ENCODE measurements at regions of chr2 and their contacts with region 1.

Region 1: GRCh38 chr2:216698895-216699294 is 3.5 kb upstream of the IGFBP5 start:
- DNase-seq: peak in 1 of 2 donors; percentile 47
- ATAC-seq: peak in 7 of 8 donors; percentile 30 to 63 (median 48)
- H3K4me3 ChIP-seq: no peak overlapping the region
- H3K27ac ChIP-seq: peak overlapping the region in 6 of 10 donors; percentile 15 to 67 (median 38)
- H3K4me1 ChIP-seq: peaks cover 10 to 80% (median 48%) of the 10 kb centered on the region in 9 donors
- H3K27me3 ChIP-seq: peaks cover 0 to 71% (median 0%) of the 10 kb centered on the region in 7 donors
- CTCF ChIP-seq: peak; percentile 43 to 83 (median 67)

Region 2: DNA sequence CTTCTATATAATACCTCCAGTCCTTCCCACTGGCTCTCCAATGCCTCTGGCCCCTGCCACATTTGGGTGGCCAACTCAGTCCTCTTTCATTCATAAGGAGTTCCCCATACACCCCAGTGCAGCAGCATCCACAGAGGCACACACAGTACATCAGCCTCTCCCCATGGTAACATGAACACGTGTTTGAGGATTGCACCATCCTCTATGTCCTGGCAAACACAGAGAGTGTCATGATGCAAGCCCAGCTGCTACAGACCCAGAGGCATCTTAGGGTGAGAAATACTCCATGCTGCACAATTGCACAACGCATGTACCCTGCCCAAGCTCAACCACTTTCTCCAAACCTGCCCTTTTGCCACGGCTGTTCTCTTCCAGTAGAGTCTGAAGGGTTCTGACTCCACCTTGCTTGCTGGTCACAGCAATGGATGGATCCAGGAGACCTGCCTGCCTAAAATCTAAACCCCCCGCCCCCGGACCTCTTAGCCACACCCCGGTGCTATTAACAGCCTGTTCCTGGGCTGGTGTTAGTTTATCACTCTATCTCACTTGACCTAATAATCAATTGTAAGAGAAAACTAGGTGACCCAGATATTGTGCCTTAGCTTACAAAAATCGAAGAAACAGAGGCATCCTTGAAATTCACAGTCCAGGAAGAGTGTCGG is 14.9 kb before region 1 on chr2:
- intact Hi-C with region 1: no loop called
- DNase-seq: no peak
- ATAC-seq: peak in 7 of 8 donors; percentile 22 to 83 (median 55)
- H3K4me3 ChIP-seq: no peak overlapping the region
- H3K27ac ChIP-seq: peak overlapping the region in 6 of 10 donors; percentile 18 to 92 (median 36)
- H3K4me1 ChIP-seq: peaks cover 22 to 98% (median 68%) of the 10 kb centered on the region in 9 donors
- H3K27me3 ChIP-seq: peaks cover 0 to 17% (median 0%) of the 10 kb centered on the region in 7 donors
- CTCF ChIP-seq: no peak

Region 3: GRCh38 chr2:216777650-216778273 is 78.9 kb after region 1 on chr2:
- intact Hi-C with region 1: loop called in 3 of 10 experiments (anchors 5 to 10 kb)
- DNase-seq: no peak
- ATAC-seq: no peak
- H3K4me3 ChIP-seq: no peak overlapping the region
- H3K27ac ChIP-seq: no peak overlapping the region
- H3K4me1 ChIP-seq: peaks cover 16 to 41% (median 24%) of the 10 kb centered on the region in 9 donors
- H3K27me3 ChIP-seq: no peaks in the 10 kb centered on the region
- CTCF ChIP-seq: peak; percentile 16 to 64 (median 45)

Region 4: GRCh38 chr2:216849987-216850386 is 151.1 kb after region 1 on chr2:
- intact Hi-C with region 1: loop called in 1 of 10 experiments (anchors 10 kb)
- DNase-seq: peak; percentile 70 to 75
- ATAC-seq: peak; percentile 47 to 92 (median 89)
- H3K4me3 ChIP-seq: no peak overlapping the region
- H3K27ac ChIP-seq: peak overlapping the region in 1 of 10 donors; percentile 40
- H3K4me1 ChIP-seq: peaks cover 2 to 29% (median 17%) of the 10 kb centered on the region in 9 donors
- H3K27me3 ChIP-seq: no peaks in the 10 kb centered on the region
- CTCF ChIP-seq: no peak

Region 5: DNA sequence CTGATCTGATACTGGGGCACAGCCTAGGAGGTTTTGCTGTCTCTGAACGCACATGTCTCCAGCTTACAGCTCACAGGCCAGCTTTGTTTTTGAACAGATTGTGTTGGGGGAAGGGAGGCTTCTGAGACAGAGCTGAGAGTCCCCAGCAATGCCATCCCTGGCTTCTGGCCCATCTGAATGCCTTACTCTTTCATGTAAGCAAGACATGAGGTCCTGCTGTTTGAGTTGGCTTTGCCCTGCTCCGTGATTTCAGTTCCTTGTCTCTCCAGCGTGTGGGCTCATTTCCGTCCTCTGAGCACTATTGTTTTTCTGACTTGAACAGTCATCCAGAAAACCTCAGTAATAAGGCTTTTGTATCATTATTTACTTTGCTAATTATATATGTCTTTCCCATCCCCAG is 355.9 kb after region 1 on chr2:
- intact Hi-C with region 1: loop called in 3 of 10 experiments (anchors 5 to 10 kb)
- DNase-seq: peak in 1 of 2 donors; percentile 29
- ATAC-seq: peak in 3 of 8 donors; percentile 12 to 36 (median 33)
- H3K4me3 ChIP-seq: no peak overlapping the region
- H3K27ac ChIP-seq: peak overlapping the region in 3 of 10 donors; percentile 32 to 47 (median 37)
- H3K4me1 ChIP-seq: peaks cover 2 to 43% (median 19%) of the 10 kb centered on the region in 9 donors
- H3K27me3 ChIP-seq: no peaks in the 10 kb centered on the region
- CTCF ChIP-seq: no peak

Region 6: GRCh38 chr2:217075268-217076057 is 376.6 kb after region 1 on chr2:
- intact Hi-C with region 1: loop called in 1 of 10 experiments (anchors 5 kb)
- DNase-seq: peak; percentile 42 to 68
- ATAC-seq: peak; percentile 70 to 94 (median 85)
- H3K4me3 ChIP-seq: no peak overlapping the region
- H3K27ac ChIP-seq: peak overlapping the region in 9 of 10 donors; percentile 60 to 84 (median 80)
- H3K4me1 ChIP-seq: peaks cover 7 to 37% (median 21%) of the 10 kb centered on the region in 9 donors
- H3K27me3 ChIP-seq: no peaks in the 10 kb centered on the region
- CTCF ChIP-seq: no peak

Region 7: DNA sequence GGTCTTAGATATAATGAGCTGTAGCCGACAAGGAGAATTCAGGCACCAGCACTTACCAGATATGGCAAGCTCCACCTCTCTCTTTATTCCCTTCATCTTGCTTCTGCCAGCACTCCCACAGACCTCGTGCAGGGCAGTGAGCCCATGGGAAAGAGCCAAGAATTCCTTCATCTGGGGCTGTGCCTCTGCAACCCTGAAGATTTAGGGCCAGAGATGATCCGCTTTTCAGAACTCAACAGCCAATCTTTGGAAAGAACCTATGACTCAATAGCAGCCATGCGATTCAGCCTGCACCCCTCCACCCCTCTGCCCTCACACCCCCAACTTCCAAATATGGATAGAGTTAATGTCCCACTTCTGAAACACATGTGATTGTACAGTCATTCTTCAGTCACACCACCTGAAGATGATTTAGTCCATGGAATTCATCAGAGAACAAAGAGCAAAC is 694.7 kb after region 1 on chr2:
- intact Hi-C with region 1: loop called in 1 of 10 experiments (anchors 10 kb)
- DNase-seq: peak; percentile 50 to 79
- ATAC-seq: peak; percentile 84 to 97 (median 94)
- H3K4me3 ChIP-seq: no peak overlapping the region
- H3K27ac ChIP-seq: peak overlapping the region in 6 of 10 donors; percentile 53 to 79 (median 72)
- H3K4me1 ChIP-seq: peaks cover 3 to 41% (median 20%) of the 10 kb centered on the region in 9 donors
- H3K27me3 ChIP-seq: no peaks in the 10 kb centered on the region
- CTCF ChIP-seq: no peak

Measured in heart right ventricle (tissue), 16 donors.